ENCODE measurements at regions of chr11 and their contacts with region 1.

Region 1: GRCh38 chr11:110479108-110480101 is 49.7 kb downstream of the FDX1 start:
- DNase-seq: no peak
- ATAC-seq: no peak
- H3K4me3 ChIP-seq: no peak overlapping the region
- H3K27ac ChIP-seq: no peak overlapping the region
- H3K4me1 ChIP-seq: no peaks in the 10 kb centered on the region
- H3K27me3 ChIP-seq: peaks cover 6% of the 10 kb centered on the region
- CTCF ChIP-seq: no peak

Region 2: GRCh38 chr11:110631551-110631950 is 152.1 kb after region 1 on chr11:
- CTCF ChIA-PET with region 1: interaction called, 11 read pairs
- POLR2A ChIA-PET with region 1: no interaction called
- in situ Hi-C with region 1: no loop called
- intact Hi-C with region 1: no loop called
- DNase-seq: no peak
- ATAC-seq: no peak
- H3K4me3 ChIP-seq: no peak overlapping the region
- H3K27ac ChIP-seq: no peak overlapping the region
- H3K4me1 ChIP-seq: no peaks in the 10 kb centered on the region
- H3K27me3 ChIP-seq: no peaks in the 10 kb centered on the region
- CTCF ChIP-seq: no peak